BJ (cell line): ENCODE measurements at regions of chr2 and their contacts with region 1.

Region 1: DNA sequence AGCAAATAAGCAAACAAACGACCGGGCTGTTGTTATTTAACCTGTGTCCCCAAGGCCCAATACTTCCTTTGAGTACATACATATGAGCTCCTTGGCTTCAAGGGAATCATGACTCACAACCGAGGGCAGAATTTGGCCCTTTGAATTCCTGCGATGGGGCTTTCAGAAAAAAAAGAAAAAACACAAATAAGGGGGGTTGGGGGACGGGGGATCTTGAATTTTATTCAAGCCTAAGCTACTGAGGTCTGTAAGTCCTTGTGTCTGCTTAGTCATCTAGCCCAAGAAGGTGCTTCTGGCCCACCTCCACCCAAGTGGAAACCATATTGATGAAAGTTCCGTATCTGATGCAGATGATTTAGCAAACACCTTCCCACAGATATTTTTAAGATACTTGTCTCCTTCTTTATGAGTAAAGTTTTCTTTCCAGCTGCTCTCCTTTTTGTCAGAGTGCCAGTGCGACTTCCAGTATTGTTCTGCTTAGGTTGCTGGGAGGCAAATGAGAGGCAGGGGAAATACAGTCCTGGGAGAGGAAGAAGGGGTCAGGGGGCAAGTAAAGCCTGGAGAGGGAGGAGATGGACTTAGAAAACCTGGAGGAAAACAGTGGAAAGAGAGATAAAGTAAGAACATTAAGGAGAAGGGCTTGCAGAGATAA is 169.6 kb downstream of the ZEB2 start:
- DNase-seq: no peak
- H3K4me3 ChIP-seq: no peak overlapping the region
- H3K27me3 ChIP-seq: no peaks in the 10 kb centered on the region
- CTCF ChIP-seq: no peak

Region 2: GRCh38 chr2:144362401-144362800 is 12.1 kb after region 1 on chr2:
- CTCF ChIA-PET with region 1: interaction called, 3 read pairs
- POLR2A ChIA-PET with region 1: interaction called, 15 read pairs
- DNase-seq: no peak
- H3K4me3 ChIP-seq: no peak overlapping the region
- H3K27me3 ChIP-seq: no peaks in the 10 kb centered on the region
- CTCF ChIP-seq: no peak